B cell (primary cell): ENCODE measurements at regions of chr11 and their contacts with region 1.

Region 1: DNA sequence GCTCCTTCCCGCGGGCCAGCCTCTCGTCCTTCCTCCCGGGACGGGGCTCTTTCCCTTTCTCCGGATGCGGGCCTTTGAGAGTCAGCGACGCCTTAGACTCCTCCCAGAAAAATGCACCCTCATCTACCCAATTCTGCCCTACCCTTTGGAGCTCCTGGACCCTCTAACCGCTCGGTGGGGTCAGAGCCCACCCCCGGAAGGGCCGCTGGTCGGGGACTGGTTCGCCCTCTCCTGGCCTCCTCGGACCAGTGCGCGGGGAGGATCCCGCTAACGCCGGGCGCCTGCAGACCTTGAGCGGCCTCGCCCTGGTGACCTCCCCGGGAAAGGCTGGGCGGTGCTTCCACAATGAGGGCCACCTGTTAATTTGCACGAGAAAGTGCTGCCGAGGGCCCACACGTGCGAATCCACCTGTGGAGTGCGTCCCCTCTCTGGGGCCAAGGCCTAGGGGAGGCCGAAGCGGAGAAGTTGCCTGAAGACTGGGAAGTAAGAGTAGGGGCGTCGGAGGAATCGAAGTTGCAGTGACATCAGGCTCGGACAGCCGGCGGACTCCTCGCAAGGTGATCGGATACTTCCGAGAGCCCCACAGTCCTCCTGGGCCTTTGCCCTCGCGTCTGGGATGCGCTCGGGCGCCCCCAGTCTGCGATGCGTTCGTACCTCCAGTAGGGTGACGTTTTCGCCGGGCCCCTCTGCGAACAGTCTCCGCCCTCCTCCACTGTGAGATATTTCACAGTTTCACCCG is 61.5 kb downstream of the ENDOD1 start:
- DNase-seq: peak; percentile 96
- ATAC-seq: peak; percentile 90
- H3K4me3 ChIP-seq: peak overlapping the region; percentile 52 to 91 (median 82)
- H3K4me3 Mint-ChIP-seq: peak overlapping the region; percentile 95
- H3K27ac ChIP-seq: peak overlapping the region; percentile 88 to 91
- H3K27ac Mint-ChIP-seq: peak overlapping the region; percentile 96
- H3K4me1 ChIP-seq: peaks cover 28 to 43% of the 10 kb centered on the region in 2 donors
- H3K4me1 Mint-ChIP-seq: peaks cover 46% of the 10 kb centered on the region
- H3K27me3 ChIP-seq: no peaks in the 10 kb centered on the region
- H3K27me3 Mint-ChIP-seq: no peaks in the 10 kb centered on the region
- CTCF ChIP-seq: peak; percentile 86

Region 2: GRCh38 chr11:94973099-94973968 is 177.8 kb before region 1 on chr11 and contains the starts of genes CWC15 and KDM4D:
- CTCF ChIA-PET with region 1: interaction called, 3 read pairs
- POLR2A ChIA-PET with region 1: interaction called, 5 read pairs
- intact Hi-C with region 1: loop called (anchors 1 kb)
- DNase-seq: peak; percentile 94
- ATAC-seq: peak; percentile 100
- H3K4me3 ChIP-seq: peak within 1 kb of the TSS; percentile 75 to 97 (median 87)
- H3K4me3 Mint-ChIP-seq: peak within 1 kb of the TSS; percentile 92
- H3K27ac ChIP-seq: peak within 1 kb of the TSS; percentile 74 to 83
- H3K27ac Mint-ChIP-seq: peak within 1 kb of the TSS; percentile 94
- H3K4me1 ChIP-seq: peaks cover 10 to 14% of the 10 kb centered on the region in 2 donors
- H3K4me1 Mint-ChIP-seq: peaks cover 13% of the 10 kb centered on the region
- H3K27me3 ChIP-seq: no peaks in the 10 kb centered on the region
- H3K27me3 Mint-ChIP-seq: no peaks in the 10 kb centered on the region
- CTCF ChIP-seq: no peak
- total RNA-seq, gene CWC15: 59.5 and 59.8 TPM in 2 replicates
- total RNA-seq, gene KDM4D: 0.44 and 0.73 TPM in 2 replicates

Region 3: DNA sequence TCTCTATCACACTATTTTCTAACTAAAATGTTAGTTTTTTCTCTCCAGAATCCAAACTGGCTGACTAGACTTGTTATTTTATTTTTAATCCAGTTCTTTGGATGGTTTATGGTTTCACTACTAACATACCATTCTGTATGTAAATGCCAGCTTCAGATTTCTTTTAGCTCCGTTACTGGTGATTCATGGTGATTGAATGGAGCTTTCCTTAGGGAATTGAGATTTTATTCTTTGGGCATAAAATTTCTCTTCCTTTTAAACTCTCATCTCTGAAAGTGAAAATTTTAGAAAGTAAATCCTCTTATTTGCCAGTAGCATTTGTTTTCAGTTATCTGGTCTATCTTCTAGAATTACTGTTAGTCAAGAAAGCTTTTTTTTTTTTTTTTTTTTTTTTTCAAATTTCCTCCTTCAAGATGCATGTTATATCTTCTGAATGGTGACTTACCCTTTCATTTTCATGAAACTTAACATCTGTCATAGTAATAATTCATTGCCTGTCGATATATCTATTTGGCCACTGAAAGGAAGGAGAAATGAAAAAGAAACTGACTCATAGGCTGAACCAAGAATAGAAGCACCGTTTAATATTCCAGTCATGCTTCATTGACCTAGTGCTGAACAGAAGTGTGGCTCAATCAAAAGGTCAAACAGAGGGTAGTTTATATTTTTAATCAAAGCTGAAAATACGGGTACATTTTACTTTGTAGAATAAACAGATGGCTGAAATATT is 55.1 kb before region 1 on chr11:
- CTCF ChIA-PET with region 1: interaction called, 5 read pairs
- POLR2A ChIA-PET with region 1: interaction called, 17 read pairs
- intact Hi-C with region 1: loop called (anchors 1 kb)
- DNase-seq: peak; percentile 54
- ATAC-seq: peak; percentile 86
- H3K4me3 ChIP-seq: peak overlapping the region in 1 of 5 experiments; percentile 0
- H3K4me3 Mint-ChIP-seq: peak overlapping the region; percentile 44
- H3K27ac ChIP-seq: peak overlapping the region; percentile 31 to 54
- H3K27ac Mint-ChIP-seq: peak overlapping the region; percentile 76
- H3K4me1 ChIP-seq: peaks cover 71 to 73% of the 10 kb centered on the region in 2 donors
- H3K4me1 Mint-ChIP-seq: peaks cover 86% of the 10 kb centered on the region
- H3K27me3 ChIP-seq: no peaks in the 10 kb centered on the region
- H3K27me3 Mint-ChIP-seq: no peaks in the 10 kb centered on the region
- CTCF ChIP-seq: no peak

Region 4: DNA sequence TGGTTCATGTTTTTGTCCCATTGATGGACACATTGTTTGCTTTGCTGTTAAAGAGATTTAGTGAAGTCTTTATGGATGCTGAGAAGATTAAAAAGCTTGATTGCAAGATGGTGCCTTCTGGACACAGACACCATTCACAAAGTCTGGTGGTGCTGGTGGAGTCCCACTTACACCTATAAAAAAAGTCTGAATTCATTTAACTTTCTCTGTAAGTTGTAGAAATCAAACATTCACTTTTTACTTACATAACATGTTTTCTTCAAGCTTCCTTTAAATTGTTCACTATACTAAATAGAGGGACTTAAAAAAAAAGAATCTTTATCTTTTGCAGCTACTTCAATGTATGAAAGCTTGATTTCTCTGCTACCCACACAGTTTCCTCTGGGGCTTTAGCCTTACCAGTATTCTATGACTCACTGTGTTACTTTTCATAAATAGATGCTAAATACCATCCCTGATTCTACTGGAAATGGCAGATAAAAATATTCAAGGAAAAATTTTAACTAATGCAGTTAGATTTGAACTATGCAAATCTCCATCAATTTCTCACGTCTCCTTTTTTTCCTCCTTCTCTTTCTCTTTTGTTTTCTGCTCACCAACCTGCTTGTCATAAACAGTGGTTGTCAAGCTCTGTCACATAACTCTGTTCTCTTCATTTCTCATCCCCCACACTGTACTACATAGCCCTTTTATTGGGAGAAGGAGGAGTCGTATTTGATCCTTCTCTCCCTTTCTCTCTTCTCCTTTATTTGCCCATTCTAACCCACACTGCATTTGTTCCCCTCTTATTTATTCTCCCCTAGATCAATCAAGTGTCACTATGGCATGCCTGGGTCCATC is 548.7 kb after region 1 on chr11:
- CTCF ChIA-PET with region 1: interaction called, 169 read pairs
- POLR2A ChIA-PET with region 1: interaction called, 3 read pairs
- intact Hi-C with region 1: loop called (anchors 1 kb)
- DNase-seq: no peak
- ATAC-seq: peak; percentile 49
- H3K4me3 ChIP-seq: peak overlapping the region in 4 of 5 experiments; percentile 25 to 56 (median 32)
- H3K4me3 Mint-ChIP-seq: peak overlapping the region; percentile 79
- H3K27ac ChIP-seq: peak overlapping the region; percentile 83 to 89
- H3K27ac Mint-ChIP-seq: peak overlapping the region; percentile 88
- H3K4me1 ChIP-seq: peaks cover 49 to 53% of the 10 kb centered on the region in 2 donors
- H3K4me1 Mint-ChIP-seq: peaks cover 52% of the 10 kb centered on the region
- H3K27me3 ChIP-seq: no peaks in the 10 kb centered on the region
- H3K27me3 Mint-ChIP-seq: no peaks in the 10 kb centered on the region
- CTCF ChIP-seq: no peak

Region 5: GRCh38 chr11:95790123-95790932 is 639.2 kb after region 1 on chr11 and contains the start of gene CEP57:
- CTCF ChIA-PET with region 1: interaction called, 11 read pairs
- POLR2A ChIA-PET with region 1: interaction called, 14 read pairs
- intact Hi-C with region 1: loop called (anchors 1 kb)
- DNase-seq: peak; percentile 98
- ATAC-seq: peak; percentile 63
- H3K4me3 ChIP-seq: peak within 1 kb of the TSS; percentile 73 to 99 (median 96)
- H3K4me3 Mint-ChIP-seq: peak within 1 kb of the TSS; percentile 97
- H3K27ac ChIP-seq: peak within 1 kb of the TSS; percentile 98 to 100
- H3K27ac Mint-ChIP-seq: peak within 1 kb of the TSS; percentile 99
- H3K4me1 ChIP-seq: peaks cover 20% of the 10 kb centered on the region in 2 donors
- H3K4me1 Mint-ChIP-seq: peaks cover 51% of the 10 kb centered on the region
- H3K27me3 ChIP-seq: no peaks in the 10 kb centered on the region
- H3K27me3 Mint-ChIP-seq: no peaks in the 10 kb centered on the region
- CTCF ChIP-seq: no peak
- total RNA-seq, gene CEP57: 78.1 and 82.9 TPM in 2 replicates